CD4-positive, alpha-beta memory T cell (primary cell): ENCODE measurements at regions of chr10 and their contacts with region 1.

Region 1: DNA sequence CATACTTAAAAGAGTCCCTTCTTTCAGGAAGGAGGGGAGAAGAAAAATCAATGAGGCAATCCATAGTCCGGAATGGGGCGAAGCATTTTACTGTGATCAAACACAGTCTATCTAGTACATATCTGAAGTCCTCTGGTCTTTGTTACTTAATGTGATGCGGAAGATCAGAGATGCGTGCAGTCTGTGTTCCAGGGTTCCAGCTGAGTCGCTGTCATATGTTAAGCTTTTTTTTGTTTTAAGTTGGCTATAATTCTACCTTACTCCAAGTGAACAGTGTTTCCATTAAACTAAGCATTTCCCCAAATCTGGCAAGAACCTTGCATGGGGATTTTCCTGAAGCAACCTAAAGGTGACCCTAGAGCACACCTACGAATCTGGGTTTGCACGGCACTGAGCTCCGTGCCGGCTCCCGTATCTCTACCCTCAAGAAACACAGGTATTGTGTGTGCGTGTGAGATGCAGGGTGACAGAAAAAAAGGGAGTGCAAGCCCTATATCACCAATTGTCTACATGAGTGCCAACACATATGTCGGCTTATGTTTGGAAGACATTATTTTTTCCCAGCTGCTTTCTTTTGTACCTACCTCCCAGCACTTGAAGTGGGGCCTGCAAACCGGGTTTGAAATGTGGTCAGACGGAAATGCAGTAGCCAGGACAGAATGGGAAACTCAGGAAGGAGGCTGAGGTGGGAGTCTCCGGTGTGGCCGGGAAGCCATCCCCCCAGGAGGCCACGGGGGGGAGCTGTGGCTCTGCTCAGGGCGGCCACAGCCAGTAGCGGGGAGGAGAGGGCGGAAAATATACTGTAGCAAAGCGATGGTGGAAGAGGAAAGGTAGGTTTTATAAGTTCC is 435.8 kb upstream of the MGMT start:
- DNase-seq: peak in 4 of 5 donors; percentile 23 to 47 (median 34)
- H3K4me3 ChIP-seq: no peak overlapping the region
- H3K4me3 Mint-ChIP-seq: peak overlapping the region in 4 of 8 donors; percentile 1 to 67 (median 32)
- H3K27ac ChIP-seq: no peak overlapping the region
- H3K27ac Mint-ChIP-seq: no peak overlapping the region
- H3K4me1 ChIP-seq: peaks cover 23% of the 10 kb centered on the region
- H3K4me1 Mint-ChIP-seq: peaks cover 11 to 34% (median 24%) of the 10 kb centered on the region in 4 donors
- H3K27me3 ChIP-seq: no peaks in the 10 kb centered on the region
- H3K27me3 Mint-ChIP-seq: peaks cover 2 to 3% of the 10 kb centered on the region in 2 donors

Region 2: DNA sequence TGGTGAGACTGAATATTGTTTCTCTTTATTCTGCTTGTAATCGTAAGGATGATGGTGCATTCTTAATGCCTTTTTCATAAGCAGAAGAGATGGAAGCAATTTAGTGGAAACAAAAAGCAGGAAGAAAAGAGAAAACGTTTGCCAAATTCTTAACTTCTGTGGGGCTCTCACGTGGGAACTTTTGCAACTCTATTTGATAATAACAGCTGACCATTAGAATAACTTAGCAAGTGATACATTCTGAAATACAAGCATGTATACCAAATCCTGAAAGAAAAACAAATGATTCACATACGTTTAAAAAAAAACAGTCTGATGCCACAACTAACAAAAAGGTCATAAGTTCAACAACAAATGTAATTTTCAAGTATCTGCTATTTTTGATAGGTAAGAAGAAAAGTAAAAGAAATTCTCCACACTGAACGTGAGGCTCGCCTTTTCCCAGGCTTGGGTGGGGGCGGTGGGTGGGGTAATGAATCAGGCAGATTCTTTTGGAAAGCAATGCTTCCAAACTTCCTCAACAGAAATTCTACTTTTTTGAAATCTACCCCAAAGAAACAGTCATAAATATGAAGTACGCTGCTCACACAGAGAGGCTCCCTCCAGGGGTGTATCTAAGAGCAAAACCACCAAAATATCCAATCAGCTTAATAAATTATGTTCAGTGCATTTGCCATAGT is 10.4 kb before region 1 on chr10:
- CTCF ChIA-PET with region 1: no interaction called
- POLR2A ChIA-PET with region 1: no interaction called
- intact Hi-C with region 1: no loop called
- DNase-seq: no peak
- H3K4me3 ChIP-seq: no peak overlapping the region
- H3K4me3 Mint-ChIP-seq: no peak overlapping the region
- H3K27ac ChIP-seq: no peak overlapping the region
- H3K27ac Mint-ChIP-seq: no peak overlapping the region
- H3K4me1 ChIP-seq: no peaks in the 10 kb centered on the region
- H3K4me1 Mint-ChIP-seq: no peaks in the 10 kb centered on the region
- H3K27me3 ChIP-seq: no peaks in the 10 kb centered on the region
- H3K27me3 Mint-ChIP-seq: peaks cover 0 to 1% of the 10 kb centered on the region in 2 donors

Region 3: GRCh38 chr10:129104266-129105045 is 73.2 kb after region 1 on chr10:
- CTCF ChIA-PET with region 1: no interaction called
- POLR2A ChIA-PET with region 1: interaction called, 3 read pairs
- intact Hi-C with region 1: loop called (anchors 1 kb)
- DNase-seq: no peak
- H3K4me3 ChIP-seq: no peak overlapping the region
- H3K4me3 Mint-ChIP-seq: peak overlapping the region in 2 of 8 donors; percentile 43 to 61
- H3K27ac ChIP-seq: no peak overlapping the region
- H3K27ac Mint-ChIP-seq: peak overlapping the region in 3 of 7 donors; percentile 12 to 57 (median 28)
- H3K4me1 ChIP-seq: peaks cover 8% of the 10 kb centered on the region
- H3K4me1 Mint-ChIP-seq: peaks cover 6 to 40% (median 30%) of the 10 kb centered on the region in 4 donors
- H3K27me3 ChIP-seq: no peaks in the 10 kb centered on the region
- H3K27me3 Mint-ChIP-seq: no peaks in the 10 kb centered on the region

Region 4: DNA sequence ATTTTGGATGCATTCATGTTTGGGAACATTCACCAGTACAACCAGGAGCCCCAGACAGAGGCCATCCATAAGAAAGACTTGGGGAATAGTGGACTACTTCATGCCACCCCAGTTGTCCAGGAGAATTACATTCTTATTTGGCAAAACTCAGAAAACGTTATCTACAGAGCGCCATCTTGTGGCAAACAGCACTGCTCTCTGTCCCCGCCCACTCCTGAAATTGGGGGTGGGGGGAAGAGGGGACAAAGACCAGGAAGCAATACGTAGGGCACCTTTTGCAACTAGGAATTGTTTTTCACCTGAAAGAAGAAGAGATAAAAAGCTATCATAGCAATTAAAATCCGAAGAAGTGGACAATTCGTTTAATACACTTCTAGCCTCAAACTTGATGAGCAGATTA is 301.3 kb after region 1 on chr10:
- CTCF ChIA-PET with region 1: interaction called, 21 read pairs
- POLR2A ChIA-PET with region 1: interaction called, 4 read pairs
- intact Hi-C with region 1: no loop called
- DNase-seq: peak in 3 of 5 donors; percentile 0 to 13 (median 1)
- H3K4me3 ChIP-seq: no peak overlapping the region
- H3K4me3 Mint-ChIP-seq: no peak overlapping the region
- H3K27ac ChIP-seq: no peak overlapping the region
- H3K27ac Mint-ChIP-seq: peak overlapping the region in 1 of 7 donors; percentile 25
- H3K4me1 ChIP-seq: no peaks in the 10 kb centered on the region
- H3K4me1 Mint-ChIP-seq: peaks cover 0 to 7% (median 0%) of the 10 kb centered on the region in 4 donors
- H3K27me3 ChIP-seq: no peaks in the 10 kb centered on the region
- H3K27me3 Mint-ChIP-seq: peaks cover 2 to 3% of the 10 kb centered on the region in 2 donors

Region 5: GRCh38 chr10:129963641-129964501 is 932.7 kb after region 1 on chr10 and contains the start of gene EBF3:
- CTCF ChIA-PET with region 1: no interaction called
- POLR2A ChIA-PET with region 1: no interaction called
- intact Hi-C with region 1: loop called (anchors 10 kb)
- DNase-seq: peak in 3 of 5 donors; percentile 29 to 52 (median 42)
- H3K4me3 ChIP-seq: peak within 1 kb of the TSS in 1 of 2 donors; percentile 28
- H3K4me3 Mint-ChIP-seq: peak within 1 kb of the TSS in 7 of 8 donors; percentile 78 to 90 (median 82)
- H3K27ac ChIP-seq: no peak within 1 kb of the TSS
- H3K27ac Mint-ChIP-seq: peak within 1 kb of the TSS in 5 of 7 donors; percentile 15 to 59 (median 55)
- H3K4me1 ChIP-seq: peaks cover 13% of the 10 kb centered on the region
- H3K4me1 Mint-ChIP-seq: peaks cover 7 to 42% (median 21%) of the 10 kb centered on the region in 4 donors
- H3K27me3 ChIP-seq: peaks cover 35% of the 10 kb centered on the region
- H3K27me3 Mint-ChIP-seq: peaks cover 41 to 43% of the 10 kb centered on the region in 2 donors
- total RNA-seq, gene EBF3: not detected